ENCODE measurements at regions of chr17 and their contacts with region 1.

Region 1: DNA sequence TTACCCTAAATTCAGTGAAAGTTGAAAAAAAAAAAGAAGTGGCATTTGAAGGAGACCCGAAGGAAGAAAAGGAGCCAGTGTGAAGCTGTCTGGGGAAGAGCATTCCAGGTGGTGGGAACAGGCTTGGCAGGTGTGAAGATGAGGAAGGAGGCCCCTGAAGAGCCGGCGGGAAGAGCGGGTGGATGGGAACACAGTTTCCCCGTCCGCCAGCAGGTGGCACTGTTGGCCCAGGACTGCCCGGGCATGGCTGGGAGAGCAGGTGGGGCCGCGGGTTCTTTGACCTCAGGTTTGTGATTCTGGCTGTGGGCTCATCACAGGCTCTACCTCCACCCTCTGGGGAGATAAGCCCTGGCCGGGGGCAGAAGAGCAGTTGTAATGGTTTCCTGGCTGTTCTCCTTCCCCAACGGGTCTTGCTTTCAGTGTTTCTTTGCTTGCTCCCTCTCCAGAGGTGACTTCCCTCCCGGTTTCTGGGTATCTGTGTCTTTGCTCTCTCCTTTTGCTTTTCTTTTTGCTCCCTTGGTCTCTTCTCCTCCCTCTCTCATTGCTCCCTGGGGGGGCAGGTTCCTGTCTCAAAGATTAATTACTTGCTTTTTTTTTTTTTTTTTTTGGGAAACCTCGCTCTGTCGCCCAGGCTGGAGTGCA is 32.3 kb downstream of the RAP1GAP2 start:
- DNase-seq: peak; percentile 86
- ATAC-seq: peak; percentile 95
- H3K4me3 ChIP-seq: no peak overlapping the region
- H3K27ac ChIP-seq: no peak overlapping the region
- H3K4me1 ChIP-seq: no peaks in the 10 kb centered on the region
- H3K27me3 ChIP-seq: peaks cover 9% of the 10 kb centered on the region
- CTCF ChIP-seq: peak; percentile 93

Region 2: DNA sequence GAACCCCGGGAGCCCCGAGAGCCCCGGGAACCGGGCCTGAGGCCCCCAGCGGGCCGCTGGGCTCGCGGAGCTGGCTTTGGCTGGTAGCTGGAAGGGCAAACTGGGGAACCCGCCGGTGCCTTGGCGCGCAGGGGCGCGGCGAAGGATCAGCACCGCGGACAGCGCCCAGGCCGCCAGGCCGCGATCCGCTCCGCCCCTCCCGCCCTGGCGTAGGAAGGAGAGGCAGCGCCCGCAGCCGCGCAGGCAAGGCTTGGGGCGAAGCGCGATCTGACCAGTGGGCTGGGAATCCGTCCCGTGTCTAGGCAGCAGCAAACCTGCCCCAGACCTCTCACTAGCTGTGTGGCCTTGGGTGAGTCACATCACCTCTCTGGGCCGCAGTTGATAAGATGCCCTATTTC is 78.7 kb before region 1 on chr17:
- intact Hi-C with region 1: no loop called
- DNase-seq: peak; percentile 87
- ATAC-seq: peak; percentile 98
- H3K4me3 ChIP-seq: no peak overlapping the region
- H3K27ac ChIP-seq: no peak overlapping the region
- H3K4me1 ChIP-seq: no peaks in the 10 kb centered on the region
- H3K27me3 ChIP-seq: peaks cover 52% of the 10 kb centered on the region
- CTCF ChIP-seq: no peak

Region 3: DNA sequence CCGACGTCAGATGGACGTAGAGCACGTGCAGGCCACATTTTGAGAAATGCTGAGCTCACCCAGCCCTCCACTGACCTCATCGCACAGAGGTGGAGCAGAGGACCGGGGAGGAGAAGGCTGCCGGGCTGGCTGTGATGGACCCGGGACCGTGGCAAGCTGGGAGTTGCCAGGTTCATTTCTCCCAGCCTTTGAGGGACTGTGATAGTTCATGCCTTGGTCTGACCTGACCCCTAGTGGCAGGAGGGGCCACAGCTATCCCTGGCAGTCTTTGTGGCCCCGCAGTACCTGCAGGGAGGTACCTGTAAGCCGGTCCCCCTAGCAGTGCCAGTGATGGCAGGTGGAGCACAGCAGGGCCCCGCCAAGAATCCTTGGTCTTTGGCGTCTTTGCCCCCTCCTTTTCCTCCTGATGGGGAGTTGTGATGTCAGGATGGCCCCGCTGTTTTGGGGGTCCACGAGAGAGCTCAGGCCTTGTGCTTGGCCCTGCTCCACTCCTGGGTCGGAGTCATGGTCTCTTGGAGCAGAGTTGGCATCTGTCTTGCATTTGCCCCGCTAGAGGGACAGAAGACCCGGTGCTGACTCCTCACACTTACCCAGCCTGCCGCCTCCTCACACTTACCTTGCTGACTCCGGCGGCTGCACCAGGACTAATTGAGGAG is 184.5 kb after region 1 on chr17:
- intact Hi-C with region 1: loop called (anchors 10 kb)
- DNase-seq: peak; percentile 73
- ATAC-seq: peak; percentile 90
- H3K4me3 ChIP-seq: no peak overlapping the region
- H3K27ac ChIP-seq: no peak overlapping the region
- H3K4me1 ChIP-seq: no peaks in the 10 kb centered on the region
- H3K27me3 ChIP-seq: no peaks in the 10 kb centered on the region
- CTCF ChIP-seq: peak; percentile 88

Measured in upper lobe of right lung (tissue), 1 donor.